Activated naive CD4-positive, alpha-beta T cell treated with anti-CD3 and anti-CD28 coated beads for 36 hours (primary cell): ENCODE measurements at regions of chr19 and their contacts with region 1.

Region 1: DNA sequence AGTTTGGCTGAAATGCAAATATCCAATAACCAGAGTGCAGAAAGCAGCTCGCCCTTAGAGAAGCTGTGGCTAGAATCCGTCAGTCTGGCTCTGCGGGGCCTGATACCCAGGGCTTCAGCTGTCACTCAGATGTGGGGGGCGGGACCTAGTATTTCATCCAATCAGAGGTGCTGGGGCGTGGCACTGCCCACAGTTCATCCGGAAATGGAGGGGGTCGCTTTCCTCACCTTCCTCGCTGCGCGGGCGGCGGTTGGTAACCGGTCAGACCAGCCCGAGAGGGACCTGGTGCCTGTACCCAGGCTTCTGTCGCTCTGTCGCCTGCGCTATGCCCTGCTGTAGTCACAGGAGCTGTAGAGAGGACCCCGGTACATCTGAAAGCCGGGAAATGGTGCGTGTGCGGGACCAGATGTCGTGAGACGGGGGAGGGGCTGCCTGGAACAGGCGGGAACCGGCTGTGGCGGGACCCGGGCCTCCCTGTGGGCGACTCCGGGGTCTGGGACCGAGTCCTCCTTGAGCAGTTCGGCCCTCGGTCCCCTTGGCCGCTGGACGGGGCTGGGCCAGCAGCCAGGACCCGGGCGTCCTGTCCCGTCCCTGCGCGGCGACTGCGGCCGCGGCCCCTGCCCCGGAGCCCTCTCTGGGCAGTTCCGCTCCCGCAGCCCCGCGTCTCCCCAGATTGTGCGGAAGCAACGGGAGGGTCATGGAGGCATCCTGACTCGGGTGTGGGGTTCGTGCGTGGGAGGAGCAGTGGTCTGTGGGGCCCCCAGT is at the start of gene ZNF700:
- DNase-seq: peak; percentile 98
- H3K4me3 Mint-ChIP-seq: peak within 1 kb of the TSS; percentile 95
- H3K27ac Mint-ChIP-seq: peak within 1 kb of the TSS; percentile 98
- H3K4me1 Mint-ChIP-seq: peaks cover 32% of the 10 kb centered on the region
- H3K27me3 Mint-ChIP-seq: no peaks in the 10 kb centered on the region
- total RNA-seq, gene ZNF700: 12.3 to 12.4 TPM

Region 2: DNA sequence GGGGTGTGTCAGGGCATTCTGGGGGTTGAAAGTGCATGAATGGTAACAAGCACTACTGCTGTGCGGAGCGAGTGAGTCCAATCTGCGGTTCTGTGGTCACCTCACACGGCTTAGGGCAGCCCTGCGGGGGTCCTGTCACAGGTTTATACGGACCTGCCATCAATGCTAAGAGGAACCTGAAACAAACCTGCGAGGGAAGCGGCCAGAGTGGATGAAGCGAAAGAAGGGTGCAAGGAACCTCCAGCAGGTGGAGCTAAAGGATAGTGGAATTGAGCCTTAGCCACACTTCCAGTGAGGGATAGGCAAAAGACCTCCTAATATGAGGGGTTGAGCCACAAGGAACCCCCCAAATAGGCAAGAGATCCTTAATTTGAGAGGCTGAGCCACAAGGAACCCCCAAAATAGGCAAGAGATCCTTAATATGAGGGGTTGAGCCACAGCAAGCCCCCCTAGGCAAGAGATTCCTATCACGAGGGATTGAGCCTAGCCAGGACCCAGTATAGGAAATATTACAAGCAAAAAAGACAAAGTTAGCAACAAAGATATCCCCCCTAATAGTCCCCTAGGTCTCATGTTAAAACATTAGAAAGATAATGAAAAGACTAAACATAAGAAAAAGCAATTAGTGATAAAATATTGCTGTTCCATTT is 43.8 kb before region 1 on chr19:
- CTCF ChIA-PET with region 1: interaction called, 17 read pairs
- intact Hi-C with region 1: loop called (anchors 2 kb)
- DNase-seq: peak; percentile 78
- H3K4me3 Mint-ChIP-seq: no peak overlapping the region
- H3K27ac Mint-ChIP-seq: no peak overlapping the region
- H3K4me1 Mint-ChIP-seq: no peaks in the 10 kb centered on the region
- H3K27me3 Mint-ChIP-seq: no peaks in the 10 kb centered on the region

Region 3: GRCh38 chr19:11964858-11965645 is 40.0 kb after region 1 on chr19 and contains the start of gene ZNF763:
- CTCF ChIA-PET with region 1: interaction called, 44 read pairs
- intact Hi-C with region 1: loop called (anchors 1 kb)
- DNase-seq: peak; percentile 95
- H3K4me3 Mint-ChIP-seq: peak within 1 kb of the TSS; percentile 86
- H3K27ac Mint-ChIP-seq: peak within 1 kb of the TSS; percentile 85
- H3K4me1 Mint-ChIP-seq: peaks cover 20% of the 10 kb centered on the region
- H3K27me3 Mint-ChIP-seq: no peaks in the 10 kb centered on the region
- total RNA-seq, gene ZNF763: 0.50 to 0.54 TPM

Region 4: DNA sequence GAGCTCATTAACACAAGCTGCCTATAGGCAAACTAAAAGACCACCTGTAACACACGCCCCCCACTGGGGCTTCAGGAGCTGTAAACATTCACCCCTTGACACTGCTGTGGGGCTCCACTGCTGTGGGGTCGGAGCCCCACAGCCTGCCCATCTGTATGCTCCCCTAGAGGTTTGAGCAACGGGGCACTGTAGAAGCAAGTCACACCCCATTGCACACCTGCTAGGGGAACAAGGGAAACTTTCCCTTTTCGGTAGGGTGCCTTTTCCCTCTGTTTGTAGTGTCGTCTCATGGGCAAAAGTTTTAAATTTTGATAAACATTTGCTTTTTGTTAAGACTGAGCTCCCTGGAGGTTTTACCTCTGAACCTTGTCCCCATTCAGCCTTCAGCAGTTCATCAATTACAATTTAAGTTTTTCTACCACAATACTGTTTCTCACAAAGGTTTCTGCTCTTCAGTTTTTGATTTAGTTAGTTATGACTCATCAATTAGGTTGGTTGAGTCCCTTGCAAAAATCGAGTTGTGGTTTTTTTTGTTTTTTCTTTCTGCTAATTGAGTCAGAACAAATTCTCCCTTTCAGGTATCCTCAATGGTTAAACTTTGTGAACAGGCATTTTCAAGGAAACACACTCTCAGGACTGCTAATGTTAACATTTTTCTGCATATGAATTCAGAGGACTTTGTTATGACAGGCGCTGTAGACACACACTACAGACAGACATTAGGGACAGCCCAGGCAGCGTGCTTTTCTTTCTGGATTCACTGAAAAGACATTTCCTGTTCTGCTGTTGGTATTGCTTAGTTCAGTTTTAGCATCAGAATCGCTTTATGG is 75.3 kb after region 1 on chr19:
- CTCF ChIA-PET with region 1: no interaction called
- intact Hi-C with region 1: loop called (anchors 5 kb)
- DNase-seq: peak; percentile 70
- H3K4me3 Mint-ChIP-seq: no peak overlapping the region
- H3K27ac Mint-ChIP-seq: peak overlapping the region; percentile 78
- H3K4me1 Mint-ChIP-seq: peaks cover 19% of the 10 kb centered on the region
- H3K27me3 Mint-ChIP-seq: no peaks in the 10 kb centered on the region

Region 5: GRCh38 chr19:12064590-12065538 is 139.8 kb after region 1 on chr19 and contains the start of gene ZNF844:
- CTCF ChIA-PET with region 1: interaction called, 18 read pairs
- intact Hi-C with region 1: no loop called
- DNase-seq: peak; percentile 85
- H3K4me3 Mint-ChIP-seq: peak within 1 kb of the TSS; percentile 80
- H3K27ac Mint-ChIP-seq: no peak within 1 kb of the TSS
- H3K4me1 Mint-ChIP-seq: peaks cover 6% of the 10 kb centered on the region
- H3K27me3 Mint-ChIP-seq: no peaks in the 10 kb centered on the region
- total RNA-seq, gene ZNF844: 1.6 TPM

Region 6: GRCh38 chr19:12333162-12334159 is 408.4 kb after region 1 on chr19 and contains the start of gene ZNF563:
- CTCF ChIA-PET with region 1: no interaction called
- intact Hi-C with region 1: loop called (anchors 1 kb)
- DNase-seq: peak; percentile 100
- H3K4me3 Mint-ChIP-seq: peak within 1 kb of the TSS; percentile 97
- H3K27ac Mint-ChIP-seq: peak within 1 kb of the TSS; percentile 96
- H3K4me1 Mint-ChIP-seq: peaks cover 36% of the 10 kb centered on the region
- H3K27me3 Mint-ChIP-seq: no peaks in the 10 kb centered on the region
- total RNA-seq, gene ZNF563: 3.0 to 4.1 TPM